ENCODE measurements at regions of chr11 and their contacts with region 1.

Region 1: DNA sequence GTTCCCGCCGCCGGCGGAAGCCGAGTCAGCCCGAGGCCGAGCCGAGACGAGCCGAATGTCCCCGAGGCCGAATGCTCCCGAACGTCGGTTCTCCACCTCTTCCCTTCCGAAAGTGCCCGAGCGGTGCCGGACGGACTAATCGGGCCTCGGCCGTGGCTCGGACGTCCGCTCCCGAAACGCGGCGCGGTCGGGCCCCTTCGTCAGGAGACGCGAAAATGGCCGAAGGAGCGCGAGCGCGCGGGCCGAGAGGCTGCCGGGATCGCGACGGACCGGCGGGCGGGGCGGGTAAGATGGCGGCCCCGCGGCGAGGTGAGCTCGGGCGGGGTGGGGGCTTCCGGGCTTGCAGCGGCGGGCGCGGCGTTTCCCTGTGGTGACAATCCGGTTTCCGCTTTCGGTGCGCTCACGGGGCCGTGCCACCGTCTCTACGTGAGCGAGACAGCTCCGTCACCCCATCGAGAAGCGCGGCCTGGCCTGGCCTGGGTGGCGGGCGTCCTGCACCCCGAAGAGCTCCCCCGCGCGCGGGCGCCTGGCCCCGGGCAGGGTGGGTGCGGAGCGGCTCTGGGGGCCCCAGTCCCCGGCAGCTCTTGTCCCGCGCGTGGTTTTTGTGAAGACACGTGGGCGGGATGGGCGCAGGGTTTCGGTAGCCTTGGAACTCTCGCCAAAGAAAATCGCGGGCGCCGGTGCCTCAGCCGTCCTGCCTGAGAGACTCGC is at the start of gene TMEM80:
- DNase-seq: peak; percentile 91 to 98 (median 98)
- ATAC-seq: peak; percentile 76
- H3K4me3 ChIP-seq: peak within 1 kb of the TSS; percentile 97
- H3K4me3 Mint-ChIP-seq: peak within 1 kb of the TSS; percentile 84 to 92 (median 89)
- H3K27ac ChIP-seq: peak within 1 kb of the TSS; percentile 100
- H3K27ac Mint-ChIP-seq: peak within 1 kb of the TSS; percentile 88 to 98 (median 95)
- H3K4me1 ChIP-seq: peaks cover 13 to 42% of the 10 kb centered on the region in 2 donors
- H3K4me1 Mint-ChIP-seq: peaks cover 40 to 56% (median 52%) of the 10 kb centered on the region in 7 donors
- H3K27me3 ChIP-seq: no peaks in the 10 kb centered on the region
- H3K27me3 Mint-ChIP-seq: no peaks in the 10 kb centered on the region
- total RNA-seq, gene TMEM80: 26.2 to 44.3 (median 40.4) TPM

Region 2: GRCh38 chr11:269146-269890 is 426.4 kb before region 1 on chr11:
- CTCF ChIA-PET with region 1: no interaction called
- POLR2A ChIA-PET with region 1: no interaction called
- intact Hi-C with region 1: loop called in 1 of 2 experiments (anchors 1 kb)
- DNase-seq: peak; percentile 43 to 95 (median 88)
- ATAC-seq: peak; percentile 84
- H3K4me3 ChIP-seq: peak overlapping the region; percentile 59
- H3K4me3 Mint-ChIP-seq: peak overlapping the region; percentile 85 to 96 (median 90)
- H3K27ac ChIP-seq: peak overlapping the region; percentile 80
- H3K27ac Mint-ChIP-seq: peak overlapping the region; percentile 92 to 100 (median 99)
- H3K4me1 ChIP-seq: peaks cover 24 to 26% of the 10 kb centered on the region in 2 donors
- H3K4me1 Mint-ChIP-seq: peaks cover 20 to 47% (median 35%) of the 10 kb centered on the region in 7 donors
- H3K27me3 ChIP-seq: no peaks in the 10 kb centered on the region
- H3K27me3 Mint-ChIP-seq: peaks cover 0 to 8% (median 0%) of the 10 kb centered on the region in 5 donors

Region 3: GRCh38 chr11:535519-536454 is 159.9 kb before region 1 on chr11 and contains the start of gene HRAS:
- CTCF ChIA-PET with region 1: interaction called, 3 read pairs
- POLR2A ChIA-PET with region 1: interaction called, 8 read pairs
- intact Hi-C with region 1: loop called (anchors 1 to 5 kb)
- DNase-seq: peak; percentile 92 to 99 (median 96)
- ATAC-seq: peak; percentile 93
- H3K4me3 ChIP-seq: peak within 1 kb of the TSS; percentile 66
- H3K4me3 Mint-ChIP-seq: peak within 1 kb of the TSS; percentile 87 to 97 (median 91)
- H3K27ac ChIP-seq: peak within 1 kb of the TSS; percentile 75
- H3K27ac Mint-ChIP-seq: peak within 1 kb of the TSS; percentile 84 to 96 (median 91)
- H3K4me1 ChIP-seq: peaks cover 20 to 21% of the 10 kb centered on the region in 2 donors
- H3K4me1 Mint-ChIP-seq: peaks cover 5 to 16% (median 11%) of the 10 kb centered on the region in 7 donors
- H3K27me3 ChIP-seq: no peaks in the 10 kb centered on the region
- H3K27me3 Mint-ChIP-seq: no peaks in the 10 kb centered on the region
- total RNA-seq, gene HRAS: 22.3 to 52.0 (median 31.9) TPM

Region 4: DNA sequence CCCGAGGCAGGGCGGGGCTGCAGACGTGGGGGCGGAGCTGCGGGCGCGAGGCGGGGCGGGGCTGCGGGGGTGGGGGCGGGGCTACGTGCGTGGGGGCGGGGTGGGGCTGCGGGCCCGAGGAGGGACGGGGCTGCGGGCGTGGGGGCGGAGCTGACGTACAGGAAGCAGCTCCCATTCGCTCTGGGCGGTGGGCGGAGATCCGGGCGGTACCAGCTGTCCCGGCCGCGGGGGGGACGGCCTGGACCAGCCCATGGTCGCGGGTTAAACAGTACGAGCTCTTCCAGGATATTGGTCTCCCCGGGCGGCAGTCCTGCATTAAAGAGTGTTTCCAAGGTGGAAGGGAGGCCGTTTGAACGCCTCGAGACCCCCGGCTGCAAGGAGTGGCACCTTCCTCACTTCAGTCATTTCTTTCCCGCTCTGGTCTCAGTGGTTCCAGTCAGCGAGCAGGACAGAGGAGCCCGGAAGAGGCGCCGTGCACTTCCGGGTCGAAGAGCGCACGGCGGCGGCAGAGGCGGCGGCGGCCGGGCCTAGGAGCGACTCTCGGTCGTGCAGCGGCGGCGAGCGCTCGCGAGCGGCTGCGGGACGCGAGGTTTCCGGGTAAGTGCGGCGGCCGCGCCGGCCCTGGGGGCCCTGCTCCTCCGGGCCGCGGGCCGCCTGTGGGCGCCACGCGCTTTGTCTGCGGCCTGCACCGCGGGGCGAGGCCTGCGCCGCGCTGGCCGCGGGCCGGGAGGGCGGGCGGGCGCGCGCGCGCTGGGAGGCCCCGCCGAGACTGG is 119.5 kb before region 1 on chr11 and contains the start of gene PHRF1:
- CTCF ChIA-PET with region 1: no interaction called
- POLR2A ChIA-PET with region 1: interaction called, 14 read pairs
- intact Hi-C with region 1: loop called (anchors 1 kb)
- DNase-seq: peak; percentile 93 to 99 (median 97)
- ATAC-seq: peak; percentile 93
- H3K4me3 ChIP-seq: peak within 1 kb of the TSS; percentile 98
- H3K4me3 Mint-ChIP-seq: peak within 1 kb of the TSS; percentile 93 to 99 (median 98)
- H3K27ac ChIP-seq: peak within 1 kb of the TSS; percentile 98
- H3K27ac Mint-ChIP-seq: peak within 1 kb of the TSS; percentile 96 to 100 (median 99)
- H3K4me1 ChIP-seq: peaks cover 26 to 44% of the 10 kb centered on the region in 2 donors
- H3K4me1 Mint-ChIP-seq: peaks cover 42 to 60% (median 46%) of the 10 kb centered on the region in 7 donors
- H3K27me3 ChIP-seq: no peaks in the 10 kb centered on the region
- H3K27me3 Mint-ChIP-seq: peaks cover 0 to 9% (median 0%) of the 10 kb centered on the region in 5 donors
- total RNA-seq, gene PHRF1: 47.3 to 55.2 (median 49.4) TPM

Region 5: GRCh38 chr11:720642-721246 is 25.1 kb after region 1 on chr11:
- CTCF ChIA-PET with region 1: interaction called, 16 read pairs
- POLR2A ChIA-PET with region 1: interaction called, 10 read pairs
- intact Hi-C with region 1: loop called (anchors 1 kb)
- DNase-seq: peak in 3 of 9 donors; percentile 33 to 64 (median 42)
- ATAC-seq: peak; percentile 78
- H3K4me3 ChIP-seq: no peak overlapping the region
- H3K4me3 Mint-ChIP-seq: peak overlapping the region in 5 of 10 donors; percentile 29 to 79 (median 52)
- H3K27ac ChIP-seq: no peak overlapping the region
- H3K27ac Mint-ChIP-seq: no peak overlapping the region
- H3K4me1 ChIP-seq: peaks cover 8 to 21% of the 10 kb centered on the region in 2 donors
- H3K4me1 Mint-ChIP-seq: peaks cover 6 to 15% (median 10%) of the 10 kb centered on the region in 7 donors
- H3K27me3 ChIP-seq: no peaks in the 10 kb centered on the region
- H3K27me3 Mint-ChIP-seq: peaks cover 0 to 43% (median 23%) of the 10 kb centered on the region in 5 donors

Region 6: GRCh38 chr11:798093-798713 is 102.5 kb after region 1 on chr11 and contains the start of gene SLC25A22:
- CTCF ChIA-PET with region 1: no interaction called
- POLR2A ChIA-PET with region 1: interaction called, 3 read pairs
- intact Hi-C with region 1: loop called in 1 of 2 experiments (anchors 1 kb)
- DNase-seq: peak; percentile 66 to 93 (median 83)
- ATAC-seq: peak; percentile 82
- H3K4me3 ChIP-seq: peak within 1 kb of the TSS; percentile 87
- H3K4me3 Mint-ChIP-seq: peak within 1 kb of the TSS; percentile 84 to 99 (median 90)
- H3K27ac ChIP-seq: peak within 1 kb of the TSS; percentile 93
- H3K27ac Mint-ChIP-seq: peak within 1 kb of the TSS; percentile 61 to 94 (median 92)
- H3K4me1 ChIP-seq: peaks cover 14 to 16% of the 10 kb centered on the region in 2 donors
- H3K4me1 Mint-ChIP-seq: peaks cover 0 to 15% (median 12%) of the 10 kb centered on the region in 7 donors
- H3K27me3 ChIP-seq: no peaks in the 10 kb centered on the region
- H3K27me3 Mint-ChIP-seq: no peaks in the 10 kb centered on the region
- total RNA-seq, gene SLC25A22: 17.4 to 58.4 (median 21.3) TPM

Region 7: DNA sequence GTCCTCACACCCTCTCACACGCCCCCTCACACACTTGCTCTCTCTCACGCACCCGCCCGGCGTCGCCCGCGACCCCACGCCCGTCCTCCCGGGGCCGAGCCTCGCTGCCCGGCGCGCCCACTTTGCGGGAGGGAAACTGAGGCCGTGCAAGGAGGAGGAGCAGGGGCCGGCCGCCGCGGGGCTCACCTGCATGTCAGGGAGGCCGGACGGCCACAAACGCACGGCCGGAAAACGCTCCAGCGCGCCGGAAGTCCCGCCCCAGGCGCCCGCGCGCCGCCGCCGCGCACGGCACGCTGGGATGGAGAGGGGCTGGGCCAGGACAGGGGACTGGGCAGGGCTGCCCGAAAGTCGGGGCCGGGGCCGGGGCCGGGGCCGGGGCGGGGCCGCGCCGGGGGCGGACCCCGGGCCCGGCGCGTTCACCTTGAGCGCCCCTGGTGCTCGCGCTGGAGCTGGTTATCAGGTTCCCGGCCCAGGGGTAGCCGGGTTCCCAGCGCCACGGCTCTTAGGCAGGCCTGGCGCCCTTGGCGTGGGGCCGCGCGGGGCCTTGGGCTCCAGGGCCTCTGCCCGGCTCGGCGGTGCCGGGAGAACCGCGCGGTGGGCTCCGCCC is 215.0 kb after region 1 on chr11 and contains the start of gene CHID1:
- CTCF ChIA-PET with region 1: no interaction called
- POLR2A ChIA-PET with region 1: no interaction called
- intact Hi-C with region 1: loop called in 1 of 2 experiments (anchors 1 kb)
- DNase-seq: peak; percentile 60 to 94 (median 73)
- ATAC-seq: peak; percentile 98
- H3K4me3 ChIP-seq: peak within 1 kb of the TSS; percentile 68
- H3K4me3 Mint-ChIP-seq: peak within 1 kb of the TSS; percentile 82 to 99 (median 90)
- H3K27ac ChIP-seq: peak within 1 kb of the TSS; percentile 79
- H3K27ac Mint-ChIP-seq: peak within 1 kb of the TSS; percentile 73 to 97 (median 86)
- H3K4me1 ChIP-seq: peaks cover 4 to 10% of the 10 kb centered on the region in 2 donors
- H3K4me1 Mint-ChIP-seq: peaks cover 15 to 24% (median 20%) of the 10 kb centered on the region in 7 donors
- H3K27me3 ChIP-seq: no peaks in the 10 kb centered on the region
- H3K27me3 Mint-ChIP-seq: no peaks in the 10 kb centered on the region
- total RNA-seq, gene CHID1: 30.8 to 56.3 (median 53.0) TPM